ENCODE measurements at regions of chr10 and their contacts with region 1.

Region 1: DNA sequence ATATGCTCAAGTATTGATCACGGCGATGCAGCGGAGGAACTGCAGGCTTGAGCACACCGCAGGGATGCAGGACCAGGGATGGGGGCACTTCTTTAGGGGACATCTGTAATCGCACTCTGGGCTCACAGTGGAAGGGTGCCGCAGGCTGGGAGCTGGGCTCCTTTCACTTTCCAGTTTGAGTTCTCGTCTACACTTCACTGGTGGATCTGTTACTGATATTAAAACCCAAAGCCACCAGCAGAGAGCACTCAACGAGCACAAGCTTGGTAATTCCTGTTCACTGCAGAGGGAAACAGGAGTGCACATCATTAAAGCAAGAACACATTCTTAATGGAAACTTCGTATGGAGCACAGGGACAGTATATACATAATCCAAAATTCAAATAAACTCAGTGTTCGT is 91.3 kb downstream of the PARD3 start:
- DNase-seq: peak; percentile 47
- H3K4me3 ChIP-seq: no peak overlapping the region
- H3K27ac ChIP-seq: peak overlapping the region in 1 of 4 donors; percentile 23
- H3K4me1 ChIP-seq: peaks cover 8 to 48% (median 12%) of the 10 kb centered on the region in 4 donors
- H3K27me3 ChIP-seq: no peaks in the 10 kb centered on the region
- CTCF ChIP-seq: peak; percentile 44 to 67 (median 52)
- EP300 ChIP-seq: no peak
- POLR2A ChIP-seq: no peak

Region 2: DNA sequence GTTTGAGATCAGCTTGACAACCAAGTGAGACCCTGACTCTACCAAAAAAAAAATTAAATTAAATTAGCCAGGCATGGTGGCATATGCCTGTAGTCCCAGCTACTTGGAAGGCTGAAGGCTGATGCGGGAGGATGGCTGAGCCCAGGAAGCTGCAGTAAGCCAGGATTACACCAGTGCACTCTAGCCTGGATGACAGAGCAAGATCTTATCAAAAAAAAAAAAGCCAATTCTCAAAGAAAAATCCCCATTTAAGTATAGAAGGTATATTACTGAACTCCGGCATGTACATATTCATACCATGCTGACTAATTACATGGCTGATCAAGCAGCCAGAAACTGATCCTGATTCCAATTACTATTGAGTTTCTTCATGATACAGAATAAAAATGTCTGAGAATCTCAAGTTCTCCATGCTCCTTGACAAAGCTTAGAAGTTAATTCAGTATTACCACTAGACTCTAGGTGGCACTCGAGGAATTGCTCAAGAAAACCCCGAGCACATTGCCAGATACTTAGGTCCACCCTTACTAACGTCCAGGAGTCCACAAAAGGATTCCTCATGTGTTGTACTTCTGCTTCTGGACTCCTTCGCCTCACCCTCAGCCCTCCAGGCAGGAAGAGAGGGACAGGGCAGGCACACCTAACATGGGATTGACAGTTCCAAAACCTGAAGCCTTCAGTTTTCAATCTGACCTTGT is 57.6 kb before region 1 on chr10:
- in situ Hi-C with region 1: no loop called
- intact Hi-C with region 1: loop called (anchors 10 kb)
- DNase-seq: peak; percentile 37
- H3K4me3 ChIP-seq: no peak overlapping the region
- H3K27ac ChIP-seq: no peak overlapping the region
- H3K4me1 ChIP-seq: peaks cover 0 to 25% (median 8%) of the 10 kb centered on the region in 4 donors
- H3K27me3 ChIP-seq: no peaks in the 10 kb centered on the region
- CTCF ChIP-seq: peak; percentile 48 to 59 (median 54)
- EP300 ChIP-seq: no peak
- POLR2A ChIP-seq: no peak

Region 3: DNA sequence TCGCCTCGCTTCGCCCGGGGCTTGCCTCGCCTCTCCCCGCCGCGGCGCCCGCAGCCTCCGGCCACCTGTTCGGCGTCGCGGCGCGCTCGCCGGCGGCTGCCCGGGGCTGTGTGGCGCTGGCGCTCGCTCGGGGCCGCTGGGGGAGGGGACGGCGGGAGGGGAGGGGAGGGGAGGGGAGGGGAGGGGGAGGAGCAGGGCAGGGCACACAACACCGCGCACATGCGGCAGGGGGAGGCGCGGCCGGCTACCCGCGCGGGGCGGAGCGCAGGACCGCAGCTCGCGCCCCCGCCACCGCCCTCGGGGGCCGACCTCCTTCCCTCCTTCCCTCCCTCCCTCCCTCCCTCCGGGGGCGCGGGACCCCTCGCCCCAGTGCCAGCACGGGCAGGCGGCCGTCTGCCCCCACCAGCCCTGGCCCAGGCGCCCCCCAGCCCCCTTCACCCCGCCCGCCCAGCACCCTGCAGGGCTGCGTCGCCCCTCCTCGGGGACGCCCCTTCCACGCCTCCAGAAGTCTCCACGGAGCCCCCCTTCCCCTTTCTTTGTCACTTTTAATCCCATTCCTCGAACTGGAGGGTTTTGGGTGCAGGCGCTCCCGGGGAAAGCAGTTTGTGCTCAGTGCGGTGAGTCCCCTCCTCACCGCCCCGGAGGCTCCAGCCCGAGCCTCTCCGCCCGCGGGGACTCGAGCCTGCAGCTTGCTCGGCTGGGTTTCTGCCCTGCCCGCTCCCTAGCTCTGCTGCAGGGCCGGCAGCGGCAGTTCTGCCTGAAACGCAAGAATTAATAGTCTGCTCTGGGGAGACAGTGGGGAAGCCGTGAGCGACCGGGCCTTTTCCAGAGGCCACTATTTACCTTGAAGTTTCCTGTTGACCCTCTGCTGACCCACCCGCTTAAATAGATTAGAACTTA is 91.7 kb after region 1 on chr10 and contains the start of gene PARD3:
- in situ Hi-C with region 1: no loop called
- intact Hi-C with region 1: loop called (anchors 5 kb)
- DNase-seq: peak; percentile 73
- H3K4me3 ChIP-seq: peak within 1 kb of the TSS; percentile 78 to 98 (median 91)
- H3K27ac ChIP-seq: peak within 1 kb of the TSS; percentile 91 to 95 (median 94)
- H3K4me1 ChIP-seq: peaks cover 0 to 31% (median 24%) of the 10 kb centered on the region in 4 donors
- H3K27me3 ChIP-seq: no peaks in the 10 kb centered on the region
- CTCF ChIP-seq: no peak
- EP300 ChIP-seq: no peak
- POLR2A ChIP-seq: no peak
- total RNA-seq, gene PARD3: 27.3 to 65.3 (median 55.6) TPM

Region 4: GRCh38 chr10:34889004-34889869 is 165.5 kb after region 1 on chr10:
- in situ Hi-C with region 1: no loop called
- intact Hi-C with region 1: no loop called
- DNase-seq: no peak
- H3K4me3 ChIP-seq: no peak overlapping the region
- H3K27ac ChIP-seq: no peak overlapping the region
- H3K4me1 ChIP-seq: no peaks in the 10 kb centered on the region
- H3K27me3 ChIP-seq: no peaks in the 10 kb centered on the region
- CTCF ChIP-seq: no peak
- EP300 ChIP-seq: no peak
- POLR2A ChIP-seq: no peak

Region 5: GRCh38 chr10:34960983-34961382 is 237.2 kb after region 1 on chr10:
- in situ Hi-C with region 1: loop called in 1 of 4 experiments (anchors 25 kb)
- intact Hi-C with region 1: no loop called
- DNase-seq: no peak
- H3K4me3 ChIP-seq: no peak overlapping the region
- H3K27ac ChIP-seq: no peak overlapping the region
- H3K4me1 ChIP-seq: no peaks in the 10 kb centered on the region
- H3K27me3 ChIP-seq: no peaks in the 10 kb centered on the region
- CTCF ChIP-seq: peak in 1 of 5 experiments; percentile 20
- EP300 ChIP-seq: no peak
- POLR2A ChIP-seq: no peak

Measured in transverse colon (tissue), 4 donors.